Activated CD8-positive, alpha-beta T cell treated with anti-CD3 and anti-CD28 coated beads for 36 hours (primary cell): ENCODE measurements at regions of chr1 and their contacts with region 1.

Region 1: DNA sequence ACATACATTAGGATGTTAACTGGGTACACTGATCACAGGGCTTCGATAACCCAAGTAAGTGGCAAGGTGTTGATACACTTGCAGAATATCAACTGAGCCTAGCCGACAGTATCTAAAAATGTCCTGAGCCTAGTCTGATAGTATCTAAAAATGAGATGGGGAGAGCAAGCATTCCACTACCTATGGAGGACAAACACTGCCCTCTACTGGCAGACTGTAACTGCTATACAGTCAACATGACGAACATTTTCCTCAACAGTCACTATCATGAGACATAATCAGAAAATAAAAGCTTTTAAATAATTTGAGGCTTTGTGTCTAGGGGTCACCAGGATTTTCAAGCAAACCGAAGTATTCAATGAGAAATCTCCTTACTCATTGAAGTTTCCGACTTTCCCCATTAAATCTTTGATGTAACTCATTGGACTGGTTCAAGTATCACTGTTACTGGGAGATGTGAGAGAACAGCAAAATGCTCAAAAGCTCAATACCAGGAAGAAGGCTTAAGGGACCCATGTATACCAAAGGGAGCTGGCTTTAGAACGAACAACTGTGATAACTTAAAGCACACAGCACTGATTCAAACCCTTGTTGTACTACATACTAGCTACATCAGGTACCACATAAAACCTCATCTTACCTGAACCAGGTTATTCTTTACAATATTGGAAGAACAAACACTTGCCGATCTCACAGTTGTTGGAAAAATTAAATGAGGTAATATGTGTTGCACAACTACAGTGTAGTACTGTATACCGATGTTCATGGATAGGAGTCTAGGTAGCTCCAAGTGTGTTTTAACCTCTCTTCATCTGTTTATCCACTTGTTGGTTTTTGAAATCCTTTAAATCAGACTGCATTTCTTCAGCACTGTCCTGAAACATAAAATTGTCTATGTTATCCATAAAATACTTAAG is 31.1 kb upstream of the SLC45A3 start:
- DNase-seq: peak; percentile 83
- ATAC-seq: peak; percentile 87
- H3K4me3 Mint-ChIP-seq: no peak overlapping the region
- H3K27ac Mint-ChIP-seq: peak overlapping the region; percentile 32
- H3K4me1 Mint-ChIP-seq: peaks cover 12% of the 10 kb centered on the region
- H3K27me3 Mint-ChIP-seq: no peaks in the 10 kb centered on the region
- CTCF ChIP-seq: peak; percentile 91

Region 2: GRCh38 chr1:205591522-205592351 is 119.6 kb before region 1 on chr1:
- CTCF ChIA-PET with region 1: interaction called, 55 read pairs
- POLR2A ChIA-PET with region 1: no interaction called
- intact Hi-C with region 1: no loop called
- DNase-seq: peak; percentile 95
- ATAC-seq: peak; percentile 93
- H3K4me3 Mint-ChIP-seq: peak overlapping the region; percentile 84
- H3K27ac Mint-ChIP-seq: peak overlapping the region; percentile 93
- H3K4me1 Mint-ChIP-seq: peaks cover 38% of the 10 kb centered on the region
- H3K27me3 Mint-ChIP-seq: no peaks in the 10 kb centered on the region
- CTCF ChIP-seq: peak; percentile 96

Region 3: GRCh38 chr1:205680073-205680851 is 31.1 kb before region 1 on chr1 and contains the start of gene SLC45A3:
- CTCF ChIA-PET with region 1: interaction called, 33 read pairs
- POLR2A ChIA-PET with region 1: no interaction called
- intact Hi-C with region 1: no loop called
- DNase-seq: peak; percentile 48
- ATAC-seq: peak; percentile 79
- H3K4me3 Mint-ChIP-seq: peak within 1 kb of the TSS; percentile 72
- H3K27ac Mint-ChIP-seq: no peak within 1 kb of the TSS
- H3K4me1 Mint-ChIP-seq: peaks cover 12% of the 10 kb centered on the region
- H3K27me3 Mint-ChIP-seq: peaks cover 11% of the 10 kb centered on the region
- CTCF ChIP-seq: no peak
- total RNA-seq, gene SLC45A3: 0.38 to 0.65 TPM

Region 4: GRCh38 chr1:205700865-205701401 is 10.4 kb before region 1 on chr1:
- CTCF ChIA-PET with region 1: interaction called, 13 read pairs
- POLR2A ChIA-PET with region 1: interaction called, 5 read pairs
- intact Hi-C with region 1: no loop called
- DNase-seq: no peak
- ATAC-seq: no peak
- H3K4me3 Mint-ChIP-seq: no peak overlapping the region
- H3K27ac Mint-ChIP-seq: no peak overlapping the region
- H3K4me1 Mint-ChIP-seq: no peaks in the 10 kb centered on the region
- H3K27me3 Mint-ChIP-seq: peaks cover 3% of the 10 kb centered on the region
- CTCF ChIP-seq: no peak

Region 5: GRCh38 chr1:205739348-205740160 is 28.2 kb after region 1 on chr1:
- CTCF ChIA-PET with region 1: interaction called, 34 read pairs
- POLR2A ChIA-PET with region 1: interaction called, 4 read pairs
- intact Hi-C with region 1: no loop called
- DNase-seq: no peak
- ATAC-seq: no peak
- H3K4me3 Mint-ChIP-seq: no peak overlapping the region
- H3K27ac Mint-ChIP-seq: no peak overlapping the region
- H3K4me1 Mint-ChIP-seq: peaks cover 53% of the 10 kb centered on the region
- H3K27me3 Mint-ChIP-seq: no peaks in the 10 kb centered on the region
- CTCF ChIP-seq: no peak

Region 6: DNA sequence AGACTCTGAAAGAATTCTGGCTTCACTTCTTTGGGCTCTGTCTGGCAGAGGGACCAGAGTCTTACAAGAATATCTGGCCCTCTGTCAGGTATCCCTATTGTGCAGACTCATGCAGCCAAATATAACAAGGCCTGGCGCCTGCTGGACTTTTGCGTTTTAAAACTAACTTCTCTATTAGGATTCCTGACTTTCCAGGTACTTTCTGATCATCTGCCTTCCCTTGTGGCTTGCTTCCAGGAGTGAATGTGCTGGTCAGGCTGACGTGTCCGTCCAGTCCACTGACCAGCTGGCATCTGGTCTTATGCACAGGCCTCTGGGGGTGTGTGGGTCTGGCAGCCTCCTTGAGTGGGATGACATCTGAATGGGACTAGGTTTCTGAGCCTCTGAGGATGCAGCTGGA is 72.5 kb after region 1 on chr1:
- CTCF ChIA-PET with region 1: interaction called, 15 read pairs
- POLR2A ChIA-PET with region 1: no interaction called
- intact Hi-C with region 1: no loop called
- DNase-seq: no peak
- ATAC-seq: no peak
- H3K4me3 Mint-ChIP-seq: no peak overlapping the region
- H3K27ac Mint-ChIP-seq: no peak overlapping the region
- H3K4me1 Mint-ChIP-seq: peaks cover 7% of the 10 kb centered on the region
- H3K27me3 Mint-ChIP-seq: no peaks in the 10 kb centered on the region
- CTCF ChIP-seq: no peak